Calu3 (cell line): ENCODE measurements at regions of chr14 and their contacts with region 1.

Region 1: GRCh38 chr14:32076278-32077080 is 625 bp upstream of the ARHGAP5 start:
- DNase-seq: peak; percentile 97
- H3K4me3 Mint-ChIP-seq: peak overlapping the region; percentile 84
- H3K27ac Mint-ChIP-seq: peak overlapping the region; percentile 86
- H3K4me1 Mint-ChIP-seq: peaks cover 21% of the 10 kb centered on the region
- H3K27me3 Mint-ChIP-seq: no peaks in the 10 kb centered on the region
- CTCF ChIP-seq: no peak

Region 2: GRCh38 chr14:31937721-31938346 is 138.6 kb before region 1 on chr14:
- CTCF ChIA-PET with region 1: interaction called, 5 read pairs
- intact Hi-C with region 1: loop called (anchors 2 kb)
- DNase-seq: peak; percentile 76
- H3K4me3 Mint-ChIP-seq: no peak overlapping the region
- H3K27ac Mint-ChIP-seq: peak overlapping the region; percentile 94
- H3K4me1 Mint-ChIP-seq: peaks cover 46% of the 10 kb centered on the region
- H3K27me3 Mint-ChIP-seq: no peaks in the 10 kb centered on the region
- CTCF ChIP-seq: no peak

Region 3: DNA sequence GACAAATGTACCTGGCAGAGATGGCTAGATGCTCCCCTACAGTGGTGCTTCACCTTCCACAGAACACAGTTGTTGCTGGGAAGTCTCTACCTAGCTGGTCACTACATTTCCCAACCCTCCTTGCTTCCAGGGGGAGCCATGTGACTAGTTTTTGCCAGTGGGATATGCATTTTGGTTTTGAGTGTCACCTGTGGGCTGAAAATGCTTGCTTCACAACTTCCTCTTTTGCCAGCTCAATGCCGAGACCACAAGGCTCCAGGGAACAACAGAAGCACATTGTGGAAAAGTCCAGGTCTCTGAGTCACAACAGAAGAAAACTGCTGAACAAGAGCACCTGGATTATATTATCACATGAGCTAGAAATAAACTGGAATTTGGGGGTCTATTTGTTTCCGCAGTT is 47.9 kb before region 1 on chr14:
- CTCF ChIA-PET with region 1: no interaction called
- intact Hi-C with region 1: loop called (anchors 5 kb)
- DNase-seq: peak; percentile 45
- H3K4me3 Mint-ChIP-seq: no peak overlapping the region
- H3K27ac Mint-ChIP-seq: peak overlapping the region; percentile 36
- H3K4me1 Mint-ChIP-seq: peaks cover 26% of the 10 kb centered on the region
- H3K27me3 Mint-ChIP-seq: no peaks in the 10 kb centered on the region
- CTCF ChIP-seq: no peak

Region 4: DNA sequence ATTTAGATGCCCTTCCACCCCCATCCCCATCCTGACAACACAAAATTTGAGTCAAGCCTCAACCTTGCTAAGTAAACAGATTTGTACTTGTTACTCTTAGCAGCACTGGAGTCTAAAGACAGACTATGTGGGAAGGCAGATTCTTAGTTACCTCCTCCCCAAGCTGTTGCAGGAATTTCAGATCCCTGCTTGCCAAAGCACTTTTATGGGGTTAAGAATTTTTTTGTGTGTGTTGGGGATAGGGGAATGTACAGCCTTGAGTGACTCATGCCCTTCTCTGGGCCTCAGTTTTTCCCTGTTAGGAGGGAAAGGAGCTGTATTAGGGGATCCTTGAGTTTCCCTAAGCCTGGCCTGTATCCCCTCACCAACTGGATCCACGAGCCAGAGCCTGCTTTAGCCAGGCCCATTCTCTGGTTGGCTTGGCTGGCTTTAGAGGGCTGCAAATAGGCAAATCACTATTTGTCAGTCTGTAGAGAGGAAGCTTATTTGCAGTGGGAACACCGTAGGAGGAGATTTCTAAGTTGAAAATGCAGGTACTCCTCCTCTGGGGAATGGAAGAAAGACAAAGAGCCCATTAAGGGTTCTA is 154.3 kb after region 1 on chr14:
- CTCF ChIA-PET with region 1: no interaction called
- intact Hi-C with region 1: loop called (anchors 5 kb)
- DNase-seq: no peak
- H3K4me3 Mint-ChIP-seq: no peak overlapping the region
- H3K27ac Mint-ChIP-seq: no peak overlapping the region
- H3K4me1 Mint-ChIP-seq: peaks cover 40% of the 10 kb centered on the region
- H3K27me3 Mint-ChIP-seq: peaks cover 36% of the 10 kb centered on the region
- CTCF ChIP-seq: no peak

Region 5: DNA sequence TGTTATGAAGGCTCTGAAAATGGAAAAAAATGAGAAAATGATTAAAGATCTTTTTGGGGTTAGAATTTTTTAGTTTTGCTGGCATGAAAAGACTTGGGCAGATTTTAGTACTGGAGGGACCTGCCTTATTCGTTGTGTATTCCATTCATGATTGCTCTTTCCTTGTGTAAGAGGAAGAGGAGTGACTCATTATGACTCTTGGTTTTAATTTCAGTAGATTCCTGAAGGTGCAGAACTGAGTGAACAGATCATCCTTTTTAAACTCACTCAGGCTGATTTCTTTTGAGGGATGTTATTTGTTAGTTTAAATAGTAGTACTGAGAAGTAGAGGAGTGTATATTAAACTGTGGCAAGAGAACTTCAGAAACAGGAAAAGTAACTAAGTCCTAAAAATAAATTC is 294.2 kb after region 1 on chr14:
- CTCF ChIA-PET with region 1: no interaction called
- intact Hi-C with region 1: loop called (anchors 10 kb)
- DNase-seq: no peak
- H3K4me3 Mint-ChIP-seq: no peak overlapping the region
- H3K27ac Mint-ChIP-seq: peak overlapping the region; percentile 76
- H3K4me1 Mint-ChIP-seq: no peaks in the 10 kb centered on the region
- H3K27me3 Mint-ChIP-seq: no peaks in the 10 kb centered on the region
- CTCF ChIP-seq: no peak